Adrenal gland (tissue), 19 donors: ENCODE measurements at regions of chr3 and their contacts with region 1.

Region 1: DNA sequence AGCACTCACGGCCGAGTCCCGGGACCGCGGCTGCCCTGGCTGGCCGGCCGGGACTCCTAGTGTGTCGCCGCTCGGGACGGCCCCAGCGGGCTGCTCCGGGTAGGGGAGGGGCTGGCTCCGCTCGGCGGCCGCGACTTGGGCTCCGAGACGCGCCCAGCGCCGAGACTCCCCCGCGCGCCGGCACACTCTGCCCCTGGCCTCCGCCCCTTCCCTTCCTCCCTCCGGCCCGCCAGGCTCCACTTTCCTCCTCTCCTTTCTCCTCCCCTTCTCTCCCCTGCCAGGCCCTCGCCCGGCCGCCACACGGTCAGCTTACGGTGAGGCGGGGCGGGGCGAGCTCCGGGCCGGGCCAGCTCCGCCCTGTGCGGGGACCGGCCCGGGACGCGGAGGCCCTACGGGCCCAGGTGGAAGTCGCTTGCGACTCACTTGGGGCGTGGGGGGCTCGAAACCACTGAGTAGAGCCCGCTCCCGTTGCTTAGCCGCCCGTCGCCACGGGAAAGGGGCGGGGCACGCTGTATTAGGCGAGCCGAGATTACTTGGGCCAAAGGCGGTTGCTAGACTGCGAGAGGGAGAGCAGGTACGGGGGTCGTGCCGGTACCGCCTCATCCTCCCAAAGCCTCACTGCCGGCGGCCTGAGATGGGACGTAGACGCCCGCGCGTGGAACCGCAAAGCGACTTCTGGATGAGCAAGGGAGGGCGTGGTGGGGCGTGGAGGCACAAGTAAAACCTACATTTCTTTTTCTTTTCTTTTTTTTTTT is at the start of gene ITGB5:
- DNase-seq: peak; percentile 79 to 88 (median 84)
- H3K4me3 ChIP-seq: peak within 1 kb of the TSS; percentile 13 to 88 (median 74)
- H3K27ac ChIP-seq: peak within 1 kb of the TSS; percentile 74 to 93 (median 87)
- H3K4me1 ChIP-seq: peaks cover 0 to 25% of the 10 kb centered on the region in 2 donors
- H3K27me3 ChIP-seq: no peaks in the 10 kb centered on the region
- CTCF ChIP-seq: peak in 1 of 6 experiments; percentile 7
- POLR2A ChIP-seq: peak; percentile 25 to 83
- total RNA-seq, gene ITGB5: 9.4 to 404 (median 106) TPM

Region 2: GRCh38 chr3:124786441-124787241 is 100.7 kb before region 1 on chr3:
- intact Hi-C with region 1: loop called in 1 of 2 experiments (anchors 5 kb)
- DNase-seq: no peak
- H3K4me3 ChIP-seq: no peak overlapping the region
- H3K27ac ChIP-seq: peak overlapping the region; percentile 20 to 76 (median 67)
- H3K4me1 ChIP-seq: peaks cover 7 to 29% of the 10 kb centered on the region in 2 donors
- H3K27me3 ChIP-seq: no peaks in the 10 kb centered on the region
- CTCF ChIP-seq: peak; percentile 30 to 69 (median 57)
- POLR2A ChIP-seq: no peak